Posterior cingulate gyrus (tissue), 11 donors: ENCODE measurements at regions of chr1 and their contacts with region 1.

Region 1: GRCh38 chr1:206489980-206490770 is 17.2 kb upstream of the RASSF5 start:
- DNase-seq: peak; percentile 43 to 96 (median 80)

Region 2: GRCh38 chr1:206583707-206584648 is 93.8 kb after region 1 on chr1:
- intact Hi-C with region 1: loop called (anchors 5 kb)
- DNase-seq: peak; percentile 61 to 96 (median 84)

Region 3: DNA sequence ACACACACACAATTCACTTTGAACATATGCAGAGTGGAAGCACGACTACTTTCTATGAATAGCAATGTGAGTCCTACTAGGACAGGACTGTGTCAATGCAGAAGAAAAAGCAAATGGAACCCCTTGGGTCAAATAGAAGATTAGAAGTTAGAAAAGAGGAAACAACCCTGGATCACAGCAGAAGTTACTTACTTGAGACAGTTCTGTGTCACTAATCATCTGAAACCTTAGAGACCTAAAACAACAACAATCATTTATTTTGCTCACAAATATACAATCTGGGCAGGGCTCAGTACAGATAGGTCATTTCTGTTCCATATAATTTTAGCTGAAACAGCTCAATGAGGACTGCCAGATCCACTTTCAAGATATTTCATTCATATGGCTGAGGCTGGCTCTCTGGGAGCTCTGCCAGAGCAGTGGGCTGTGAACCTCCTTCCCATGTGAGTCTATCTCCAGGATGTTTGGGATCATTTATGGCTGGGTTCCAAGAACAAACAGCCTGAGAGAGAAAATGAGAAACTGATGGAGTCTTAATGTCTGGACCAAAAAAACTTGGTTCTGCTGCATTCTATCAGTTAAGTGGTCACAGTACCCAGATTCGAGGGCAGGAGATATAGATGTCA is 324.7 kb after region 1 on chr1:
- intact Hi-C with region 1: no loop called
- DNase-seq: peak in 1 of 10 donors; percentile 15

Region 4: DNA sequence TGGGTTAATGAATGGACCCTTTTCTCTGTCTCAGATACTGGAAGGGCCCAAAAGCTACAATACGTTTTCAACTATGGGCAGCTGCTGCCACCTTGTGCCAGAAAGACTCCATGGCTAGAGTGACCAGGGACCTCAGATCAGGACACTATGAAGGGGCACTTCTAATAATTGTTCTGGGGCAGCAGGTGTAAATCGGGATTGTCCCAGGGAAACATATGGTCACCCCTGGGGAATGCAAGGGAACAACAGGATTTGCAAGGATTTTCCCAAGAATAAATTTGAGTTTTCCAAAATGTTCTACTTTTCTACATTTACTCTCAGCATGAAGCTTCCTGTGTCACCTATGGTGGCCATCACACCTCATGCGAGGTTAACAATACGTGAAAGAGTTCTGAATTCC is 492.0 kb after region 1 on chr1:
- intact Hi-C with region 1: loop called (anchors 10 kb)
- DNase-seq: peak in 8 of 10 donors; percentile 16 to 93 (median 66)